ENCODE measurements at regions of chr1 and their contacts with region 1.

Region 1: DNA sequence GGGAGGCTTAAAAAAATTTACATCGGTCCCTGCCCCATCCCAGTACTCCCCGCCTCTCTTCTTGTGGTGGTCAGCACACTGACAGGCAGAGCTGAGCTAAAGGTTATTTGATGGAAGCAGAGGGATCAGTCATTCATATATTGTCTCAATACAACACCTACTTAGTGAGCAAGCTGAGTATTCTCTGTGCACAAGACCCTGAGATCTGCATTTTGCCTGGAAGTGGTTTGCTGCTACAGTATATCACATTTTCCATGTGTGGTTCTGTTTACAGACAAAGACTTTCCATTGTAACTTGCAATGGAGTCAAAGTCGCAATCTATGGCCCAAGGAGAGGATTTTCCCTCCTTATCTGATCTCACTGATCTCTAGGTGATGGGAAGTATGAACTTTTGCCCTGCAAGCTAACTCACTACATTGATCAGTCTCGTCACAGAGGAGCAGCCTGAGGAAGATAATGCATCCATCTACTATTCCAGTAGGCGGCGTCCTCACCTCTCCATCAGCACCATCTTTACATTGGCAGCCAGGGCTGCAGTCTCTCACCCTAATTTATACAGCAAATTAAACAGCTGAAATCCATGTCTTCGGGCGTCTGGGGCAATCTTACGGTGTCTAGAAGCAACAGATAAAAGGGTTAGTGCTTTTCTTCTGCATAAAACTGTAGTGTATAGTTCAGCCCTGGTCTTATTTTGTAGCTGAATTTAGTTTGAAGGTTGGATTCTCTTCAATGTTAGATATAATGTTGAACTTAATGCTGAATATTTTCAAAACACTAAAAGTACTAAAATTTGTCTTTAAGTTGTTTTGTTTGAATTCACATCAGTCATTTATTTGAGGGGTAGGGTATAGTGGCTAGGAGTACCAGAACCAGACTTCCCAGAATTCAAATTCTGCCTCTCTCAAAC is 3.2 kb upstream of the TRAF5 start:
- DNase-seq: no peak
- H3K4me3 ChIP-seq: no peak overlapping the region
- H3K27ac ChIP-seq: no peak overlapping the region
- H3K4me1 ChIP-seq: peaks cover 12 to 23% (median 19%) of the 10 kb centered on the region in 4 donors
- H3K27me3 ChIP-seq: no peaks in the 10 kb centered on the region
- CTCF ChIP-seq: peak; percentile 68 to 84 (median 74)
- EP300 ChIP-seq: no peak
- POLR2A ChIP-seq: no peak

Region 2: GRCh38 chr1:210709701-210710100 is 613.7 kb before region 1 on chr1:
- intact Hi-C with region 1: no loop called
- DNase-seq: no peak
- H3K4me3 ChIP-seq: no peak overlapping the region
- H3K27ac ChIP-seq: no peak overlapping the region
- H3K4me1 ChIP-seq: no peaks in the 10 kb centered on the region
- H3K27me3 ChIP-seq: no peaks in the 10 kb centered on the region
- CTCF ChIP-seq: no peak
- EP300 ChIP-seq: no peak
- POLR2A ChIP-seq: no peak

Region 3: DNA sequence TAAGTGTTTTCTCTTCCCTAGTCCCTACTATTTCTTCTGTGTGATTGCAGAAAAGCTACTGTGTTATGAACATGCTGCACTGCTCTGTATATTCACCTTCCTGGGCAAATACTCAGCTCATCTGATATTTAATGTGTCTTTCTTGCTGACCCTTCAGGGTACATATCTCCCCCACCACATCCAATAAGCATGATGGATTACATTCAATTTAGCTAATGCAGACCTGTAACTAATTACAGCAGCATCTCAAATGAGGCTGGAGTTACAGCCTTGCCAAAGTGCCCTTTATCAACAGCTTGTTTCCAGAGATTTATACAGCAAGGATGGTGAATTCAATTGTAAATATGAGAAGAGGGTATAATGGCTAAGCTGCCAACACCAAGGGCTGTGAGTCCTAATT is 333.5 kb before region 1 on chr1:
- intact Hi-C with region 1: no loop called
- DNase-seq: no peak
- H3K4me3 ChIP-seq: no peak overlapping the region
- H3K27ac ChIP-seq: no peak overlapping the region
- H3K4me1 ChIP-seq: no peaks in the 10 kb centered on the region
- H3K27me3 ChIP-seq: no peaks in the 10 kb centered on the region
- CTCF ChIP-seq: no peak
- EP300 ChIP-seq: no peak
- POLR2A ChIP-seq: no peak

Region 4: GRCh38 chr1:211258756-211259637 is 64.4 kb before region 1 on chr1 and contains the start of gene RCOR3:
- intact Hi-C with region 1: loop called (anchors 2 kb)
- DNase-seq: peak; percentile 98
- H3K4me3 ChIP-seq: peak within 1 kb of the TSS; percentile 96 to 99 (median 98)
- H3K27ac ChIP-seq: peak within 1 kb of the TSS; percentile 99 to 100 (median 99)
- H3K4me1 ChIP-seq: peaks cover 12 to 41% (median 32%) of the 10 kb centered on the region in 4 donors
- H3K27me3 ChIP-seq: no peaks in the 10 kb centered on the region
- CTCF ChIP-seq: peak; percentile 27 to 58 (median 46)
- EP300 ChIP-seq: no peak
- POLR2A ChIP-seq: peak; percentile 82
- total RNA-seq, gene RCOR3: 21.7 to 38.0 (median 37.7) TPM

Region 5: DNA sequence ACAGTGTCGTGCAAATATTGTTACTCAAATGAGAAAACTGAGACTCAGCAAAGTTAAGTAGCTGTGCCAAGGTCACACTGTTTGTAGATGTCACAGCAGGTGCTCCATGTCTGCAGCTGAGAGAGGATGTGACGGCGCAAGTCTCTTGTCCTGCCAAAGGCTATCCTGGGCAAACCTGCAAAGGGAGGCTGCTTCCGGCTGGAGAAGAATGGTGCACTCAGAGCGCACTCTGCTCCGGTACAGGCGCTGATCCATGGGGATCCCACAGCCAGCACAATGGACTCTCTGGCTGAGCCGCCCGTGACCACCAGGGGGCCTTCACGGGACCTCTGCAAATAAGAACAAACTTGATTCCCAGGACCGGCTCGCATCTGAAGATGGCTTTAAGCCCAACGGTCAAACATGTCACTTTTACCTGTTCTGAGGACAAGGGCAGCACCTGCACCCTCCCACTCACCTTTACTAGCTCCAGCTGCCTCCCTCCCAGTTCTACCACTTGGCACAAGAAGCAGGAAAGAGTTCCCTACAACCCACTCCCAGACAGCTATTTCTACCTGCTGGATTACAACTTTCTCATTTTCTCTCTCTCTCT is 146.6 kb after region 1 on chr1:
- intact Hi-C with region 1: loop called (anchors 5 kb)
- DNase-seq: peak; percentile 96
- H3K4me3 ChIP-seq: no peak overlapping the region
- H3K27ac ChIP-seq: peak overlapping the region in 1 of 4 donors; percentile 4
- H3K4me1 ChIP-seq: peaks cover 8 to 37% (median 33%) of the 10 kb centered on the region in 4 donors
- H3K27me3 ChIP-seq: no peaks in the 10 kb centered on the region
- CTCF ChIP-seq: peak; percentile 75 to 92 (median 82)
- EP300 ChIP-seq: no peak
- POLR2A ChIP-seq: no peak

Region 6: DNA sequence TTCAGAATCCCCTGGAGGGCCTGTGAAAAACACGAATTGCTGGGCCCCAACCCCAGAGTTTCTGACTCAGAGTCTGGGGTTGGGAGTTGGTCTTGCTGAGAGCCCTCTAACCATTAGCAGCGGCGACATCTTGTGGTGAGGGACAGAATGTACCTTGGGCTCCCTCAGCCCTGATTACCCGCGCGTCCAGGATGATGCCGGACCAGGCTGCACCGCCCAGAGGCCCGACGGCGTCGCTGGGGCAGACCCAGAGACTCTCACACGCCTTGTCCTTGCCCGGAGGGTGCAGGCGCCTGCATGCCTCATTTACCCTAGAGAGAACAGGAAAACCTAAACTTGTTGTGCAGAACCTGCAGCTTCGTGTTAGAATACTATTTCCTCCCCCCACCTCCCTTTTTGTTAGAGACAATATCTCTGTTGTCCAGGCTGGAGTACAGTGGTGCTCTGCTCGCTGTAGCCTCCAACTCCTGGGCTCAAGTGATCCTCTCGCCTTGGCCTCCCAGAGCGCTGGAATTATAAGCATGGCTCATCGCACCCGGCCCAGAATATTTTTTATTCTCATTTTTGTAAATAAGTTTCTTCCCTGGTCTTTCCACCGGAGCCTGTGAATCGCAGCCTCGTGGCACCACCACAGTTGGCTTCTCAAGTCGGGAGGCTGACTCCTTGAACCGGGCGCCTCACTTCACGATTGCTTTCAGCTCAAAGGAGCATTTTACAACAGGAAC is 190.8 kb after region 1 on chr1:
- intact Hi-C with region 1: loop called (anchors 5 kb)
- DNase-seq: no peak
- H3K4me3 ChIP-seq: no peak overlapping the region
- H3K27ac ChIP-seq: no peak overlapping the region
- H3K4me1 ChIP-seq: peaks cover 10 to 22% (median 18%) of the 10 kb centered on the region in 4 donors
- H3K27me3 ChIP-seq: no peaks in the 10 kb centered on the region
- CTCF ChIP-seq: peak; percentile 75 to 82 (median 76)
- EP300 ChIP-seq: no peak
- POLR2A ChIP-seq: no peak